T-cell (primary cell): ENCODE measurements at regions of chr11 and their contacts with region 1.

Region 1: DNA sequence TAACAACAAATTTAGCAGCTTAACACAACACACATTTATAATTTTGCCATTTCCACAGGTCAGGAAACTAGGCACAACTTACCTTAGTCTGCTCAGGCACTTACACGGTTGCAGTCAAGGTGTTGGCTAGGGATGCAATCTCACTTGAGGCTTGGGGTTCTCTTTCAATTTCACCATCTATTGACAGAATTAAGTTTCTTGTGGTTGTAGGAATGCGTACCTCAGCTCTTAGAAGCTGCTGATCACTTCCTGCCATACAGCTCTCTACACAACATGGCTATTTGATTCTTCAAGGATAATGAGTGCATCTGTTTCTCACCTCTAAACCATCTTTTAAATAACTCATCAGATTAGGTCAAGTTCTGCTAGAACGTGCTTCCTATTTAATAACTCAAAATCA is 968.1 kb downstream of the LRRC4C start:
- DNase-seq: no peak
- ATAC-seq: no peak
- H3K4me3 ChIP-seq: no peak overlapping the region
- H3K4me3 Mint-ChIP-seq: no peak overlapping the region
- H3K27ac ChIP-seq: no peak overlapping the region
- H3K27ac Mint-ChIP-seq: no peak overlapping the region
- H3K4me1 ChIP-seq: no peaks in the 10 kb centered on the region
- H3K4me1 Mint-ChIP-seq: no peaks in the 10 kb centered on the region
- H3K27me3 ChIP-seq: no peaks in the 10 kb centered on the region
- H3K27me3 Mint-ChIP-seq: no peaks in the 10 kb centered on the region

Region 2: DNA sequence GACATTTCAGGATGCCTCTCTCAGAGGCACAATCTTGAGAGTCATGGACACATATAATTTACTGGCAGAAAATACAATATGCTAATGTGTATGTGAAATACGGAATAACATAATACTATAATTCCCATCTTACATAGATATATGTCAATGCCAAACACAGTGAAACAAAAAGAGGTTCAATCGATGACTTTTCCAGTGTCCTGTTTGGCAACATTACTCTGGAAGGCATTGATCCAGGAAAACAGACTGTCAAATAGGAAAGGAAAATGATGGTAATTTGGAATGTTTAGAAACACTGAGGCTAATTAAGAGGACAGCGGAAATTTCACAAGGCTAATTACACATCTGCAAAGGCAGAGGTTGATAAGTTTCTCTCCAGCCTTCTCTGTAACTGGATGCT is 25.8 kb after region 1 on chr11:
- CTCF ChIA-PET with region 1: no interaction called
- POLR2A ChIA-PET with region 1: interaction called in 1 of 2 experiments, 11 read pairs
- DNase-seq: no peak
- ATAC-seq: no peak
- H3K4me3 ChIP-seq: no peak overlapping the region
- H3K4me3 Mint-ChIP-seq: no peak overlapping the region
- H3K27ac ChIP-seq: no peak overlapping the region
- H3K27ac Mint-ChIP-seq: no peak overlapping the region
- H3K4me1 ChIP-seq: no peaks in the 10 kb centered on the region
- H3K4me1 Mint-ChIP-seq: no peaks in the 10 kb centered on the region
- H3K27me3 ChIP-seq: no peaks in the 10 kb centered on the region
- H3K27me3 Mint-ChIP-seq: no peaks in the 10 kb centered on the region